ENCODE measurements at regions of chr6 and their contacts with region 1.

Region 1: DNA sequence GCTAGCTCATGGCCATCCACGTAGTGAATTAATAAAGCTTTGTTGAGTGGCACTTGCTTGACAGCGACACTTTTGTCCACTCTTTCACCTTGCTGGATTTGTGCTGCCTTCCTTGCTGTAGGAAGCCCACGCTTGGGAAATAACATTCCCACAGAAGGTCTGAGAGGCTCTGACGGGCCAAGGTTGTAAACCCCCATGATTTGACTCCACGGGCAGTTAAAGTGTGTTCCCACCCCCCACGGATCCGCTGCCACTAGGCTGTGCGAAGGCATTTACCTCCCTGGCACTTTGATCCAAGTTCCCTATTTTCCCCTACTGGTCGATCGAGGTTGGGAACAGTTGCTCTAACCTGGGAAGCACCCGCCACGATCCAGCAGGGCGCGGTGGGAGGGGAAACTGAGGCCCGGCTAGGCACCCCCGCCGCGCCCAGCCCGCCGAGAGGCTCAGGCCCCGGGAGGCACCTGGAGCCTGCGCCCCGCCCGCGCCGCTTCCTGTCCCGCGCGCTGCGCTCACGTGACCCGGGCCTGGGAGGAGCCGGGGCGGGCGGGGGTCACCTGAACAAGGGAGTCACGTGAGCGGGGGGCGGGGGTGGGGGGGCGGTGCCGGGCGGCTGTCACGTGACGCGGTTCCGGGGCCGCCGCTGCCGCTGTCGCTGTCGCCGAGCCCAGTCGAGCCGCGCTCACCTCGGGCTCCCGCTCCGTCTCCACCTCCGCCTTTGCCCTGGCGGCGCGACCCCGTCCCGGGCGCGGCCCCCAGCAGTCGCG is at the start of gene IGF2R:
- DNase-seq: peak; percentile 88 to 94 (median 92)
- ATAC-seq: peak; percentile 95
- H3K4me3 ChIP-seq: peak within 1 kb of the TSS; percentile 69
- H3K4me3 Mint-ChIP-seq: peak within 1 kb of the TSS; percentile 88 to 98 (median 92)
- H3K27ac ChIP-seq: peak within 1 kb of the TSS; percentile 82
- H3K27ac Mint-ChIP-seq: peak within 1 kb of the TSS; percentile 89 to 97 (median 94)
- H3K4me1 ChIP-seq: peaks cover 18 to 28% of the 10 kb centered on the region in 2 donors
- H3K4me1 Mint-ChIP-seq: peaks cover 27 to 43% (median 37%) of the 10 kb centered on the region in 7 donors
- H3K27me3 ChIP-seq: no peaks in the 10 kb centered on the region
- H3K27me3 Mint-ChIP-seq: peaks cover 0 to 30% (median 0%) of the 10 kb centered on the region in 5 donors
- total RNA-seq, gene IGF2R: 59.1 to 79.2 (median 74.2) TPM

Region 2: DNA sequence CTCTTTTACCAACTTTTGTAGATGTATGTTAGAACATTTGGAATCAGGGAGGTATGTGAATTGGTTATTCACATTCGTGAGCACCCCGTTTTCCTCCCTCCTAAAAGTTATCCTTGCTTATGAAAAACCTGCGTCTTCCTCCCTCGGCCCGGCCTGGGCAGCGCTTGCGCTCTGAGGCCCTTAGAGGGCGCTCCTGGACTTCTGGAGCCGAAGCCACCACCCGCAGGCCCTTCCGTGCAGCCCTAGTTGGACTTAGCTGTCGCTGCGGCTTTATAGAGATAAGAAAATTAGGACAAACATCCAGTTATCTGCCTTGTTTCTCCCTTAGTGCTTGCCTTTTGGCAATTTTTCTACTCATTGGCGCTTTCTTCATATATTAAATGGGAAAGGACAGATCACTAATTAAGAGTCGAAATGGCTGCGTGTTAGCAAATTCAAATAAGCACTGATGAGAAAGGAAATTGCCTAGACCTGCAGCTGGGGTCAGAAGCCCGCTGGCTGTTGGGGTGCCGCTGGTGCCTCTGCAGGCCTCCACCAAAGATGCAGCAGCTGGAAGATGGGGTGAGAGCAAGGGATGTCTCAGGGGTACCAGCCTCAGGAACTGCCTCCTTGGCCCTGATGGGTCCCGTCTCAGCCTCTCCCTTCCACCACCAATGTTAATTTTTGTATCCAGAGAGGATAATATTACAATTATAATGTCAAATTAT is 794.2 kb before region 1 on chr6:
- CTCF ChIA-PET with region 1: no interaction called
- POLR2A ChIA-PET with region 1: no interaction called
- intact Hi-C with region 1: no loop called
- DNase-seq: peak; percentile 22 to 67 (median 45)
- ATAC-seq: peak; percentile 84
- H3K4me3 ChIP-seq: no peak overlapping the region
- H3K4me3 Mint-ChIP-seq: peak overlapping the region in 9 of 10 donors; percentile 19 to 69 (median 36)
- H3K27ac ChIP-seq: no peak overlapping the region
- H3K27ac Mint-ChIP-seq: no peak overlapping the region
- H3K4me1 ChIP-seq: peaks cover 0 to 9% of the 10 kb centered on the region in 2 donors
- H3K4me1 Mint-ChIP-seq: peaks cover 4 to 18% (median 10%) of the 10 kb centered on the region in 7 donors
- H3K27me3 ChIP-seq: peaks cover 6 to 16% of the 10 kb centered on the region in 2 donors
- H3K27me3 Mint-ChIP-seq: peaks cover 51 to 66% (median 59%) of the 10 kb centered on the region in 5 donors

Region 3: DNA sequence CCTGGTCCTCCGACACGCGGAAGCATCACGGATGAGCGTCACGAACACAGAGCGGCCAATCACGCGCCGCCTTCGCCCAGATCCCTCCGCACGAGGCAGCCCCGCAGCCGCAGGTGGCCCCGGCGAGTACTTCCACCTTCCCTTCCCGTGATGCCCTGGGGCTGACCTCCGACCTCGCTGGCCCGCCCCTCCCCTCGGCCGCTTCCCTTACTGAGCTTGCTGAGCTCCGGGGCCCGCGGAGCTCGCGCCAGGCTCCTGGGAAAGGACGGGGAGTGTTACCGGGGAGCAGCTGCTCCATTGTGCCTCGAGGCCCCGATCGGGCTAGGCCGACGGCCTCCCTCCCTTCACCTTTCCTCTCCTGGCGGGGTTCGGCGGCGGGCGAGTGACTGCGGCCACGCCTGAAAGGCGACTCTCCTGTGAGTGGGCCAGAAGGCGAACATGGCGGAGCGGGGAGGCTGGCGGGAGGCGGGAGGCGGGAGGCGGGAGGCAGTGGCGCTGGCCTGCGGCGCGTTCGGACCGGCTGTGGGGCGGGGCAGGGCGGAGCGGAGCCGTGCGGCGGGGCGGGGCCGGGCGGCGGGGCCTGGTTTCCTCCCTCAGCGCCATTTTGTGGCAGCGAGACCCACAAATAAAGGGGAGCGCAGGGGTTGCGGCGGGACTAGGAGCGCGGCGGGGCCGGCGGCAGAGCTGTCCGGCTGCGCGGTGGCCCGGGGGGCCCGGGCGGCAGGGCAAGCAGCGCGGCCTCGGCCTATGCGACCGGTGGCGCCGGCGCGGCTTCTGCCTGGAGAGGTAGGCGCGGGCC is 241.5 kb before region 1 on chr6 and contains the start of gene WTAP:
- CTCF ChIA-PET with region 1: no interaction called
- POLR2A ChIA-PET with region 1: interaction called, 9 read pairs
- intact Hi-C with region 1: loop called (anchors 1 to 2 kb)
- DNase-seq: peak; percentile 83 to 97 (median 97)
- ATAC-seq: peak; percentile 93
- H3K4me3 ChIP-seq: peak within 1 kb of the TSS; percentile 89
- H3K4me3 Mint-ChIP-seq: peak within 1 kb of the TSS; percentile 87 to 97 (median 95)
- H3K27ac ChIP-seq: peak within 1 kb of the TSS; percentile 91
- H3K27ac Mint-ChIP-seq: peak within 1 kb of the TSS; percentile 95 to 100 (median 99)
- H3K4me1 ChIP-seq: peaks cover 33 to 34% of the 10 kb centered on the region in 2 donors
- H3K4me1 Mint-ChIP-seq: peaks cover 34 to 79% (median 67%) of the 10 kb centered on the region in 7 donors
- H3K27me3 ChIP-seq: no peaks in the 10 kb centered on the region
- H3K27me3 Mint-ChIP-seq: peaks cover 0 to 6% (median 0%) of the 10 kb centered on the region in 5 donors
- total RNA-seq, gene WTAP: 117 to 152 (median 141) TPM

Region 4: GRCh38 chr6:159829526-159829925 is 139.1 kb before region 1 on chr6:
- CTCF ChIA-PET with region 1: no interaction called
- POLR2A ChIA-PET with region 1: no interaction called
- intact Hi-C with region 1: no loop called
- DNase-seq: no peak
- ATAC-seq: peak; percentile 53
- H3K4me3 ChIP-seq: no peak overlapping the region
- H3K4me3 Mint-ChIP-seq: no peak overlapping the region
- H3K27ac ChIP-seq: no peak overlapping the region
- H3K27ac Mint-ChIP-seq: peak overlapping the region in 1 of 9 donors; percentile 67
- H3K4me1 ChIP-seq: peaks cover 0 to 21% of the 10 kb centered on the region in 2 donors
- H3K4me1 Mint-ChIP-seq: peaks cover 9 to 42% (median 26%) of the 10 kb centered on the region in 7 donors
- H3K27me3 ChIP-seq: no peaks in the 10 kb centered on the region
- H3K27me3 Mint-ChIP-seq: peaks cover 0 to 13% (median 0%) of the 10 kb centered on the region in 5 donors

Region 5: GRCh38 chr6:159852877-159853276 is 115.7 kb before region 1 on chr6:
- CTCF ChIA-PET with region 1: no interaction called
- POLR2A ChIA-PET with region 1: no interaction called
- intact Hi-C with region 1: loop called in 1 of 2 experiments (anchors 10 kb)
- DNase-seq: peak in 6 of 9 donors; percentile 12 to 59 (median 41)
- ATAC-seq: peak; percentile 37
- H3K4me3 ChIP-seq: no peak overlapping the region
- H3K4me3 Mint-ChIP-seq: no peak overlapping the region
- H3K27ac ChIP-seq: no peak overlapping the region
- H3K27ac Mint-ChIP-seq: peak overlapping the region in 1 of 9 donors; percentile 38
- H3K4me1 ChIP-seq: no peaks in the 10 kb centered on the region
- H3K4me1 Mint-ChIP-seq: peaks cover 0 to 6% (median 0%) of the 10 kb centered on the region in 7 donors
- H3K27me3 ChIP-seq: no peaks in the 10 kb centered on the region
- H3K27me3 Mint-ChIP-seq: peaks cover 0 to 37% (median 0%) of the 10 kb centered on the region in 5 donors

Region 6: DNA sequence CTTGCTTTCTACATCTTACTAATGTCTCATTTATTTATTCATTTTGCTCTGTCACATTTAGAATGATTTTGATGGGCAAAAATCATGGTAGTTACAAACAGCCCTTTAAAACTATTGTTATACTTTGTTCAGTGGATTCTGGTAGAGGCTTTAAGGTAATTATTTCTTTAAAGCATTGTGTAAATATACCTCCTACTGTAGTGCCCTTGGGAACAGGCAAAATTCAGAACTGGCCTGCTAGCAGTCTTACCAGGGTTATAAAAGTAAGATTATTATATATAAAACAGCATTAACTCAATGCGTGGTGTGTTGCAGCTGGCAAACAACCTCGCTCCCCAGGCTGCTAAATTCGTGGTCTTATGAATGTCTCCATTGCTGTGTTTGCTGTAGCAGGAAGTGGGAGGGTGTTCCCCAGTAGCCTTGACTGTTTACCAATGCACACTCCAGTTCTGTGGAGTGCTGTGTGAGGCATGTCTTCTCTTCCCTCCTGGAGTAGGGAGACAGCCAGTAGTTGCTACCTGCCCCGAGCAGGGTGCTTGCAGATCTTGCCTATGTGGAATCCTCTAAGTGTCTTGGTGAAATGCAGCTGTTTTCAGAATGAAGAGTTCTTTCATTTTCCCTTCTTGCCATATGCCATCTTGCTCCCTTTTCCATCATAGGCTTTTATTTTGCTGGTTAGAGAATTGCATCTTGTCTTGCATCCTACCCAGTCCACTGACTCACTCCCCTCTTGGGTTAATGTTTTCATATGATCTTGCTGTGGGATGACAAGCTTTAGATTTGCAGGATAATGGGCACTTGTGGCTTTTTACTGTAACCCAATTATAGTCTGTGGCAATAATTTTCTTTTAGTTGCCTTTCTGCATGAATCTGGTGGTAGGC is 45.6 kb after region 1 on chr6:
- CTCF ChIA-PET with region 1: no interaction called
- POLR2A ChIA-PET with region 1: interaction called, 13 read pairs
- intact Hi-C with region 1: loop called (anchors 1 kb)
- DNase-seq: peak in 7 of 9 donors; percentile 12 to 31 (median 25)
- ATAC-seq: peak; percentile 72
- H3K4me3 ChIP-seq: peak overlapping the region; percentile 24
- H3K4me3 Mint-ChIP-seq: peak overlapping the region; percentile 50 to 86 (median 75)
- H3K27ac ChIP-seq: peak overlapping the region; percentile 52
- H3K27ac Mint-ChIP-seq: peak overlapping the region; percentile 82 to 96 (median 89)
- H3K4me1 ChIP-seq: peaks cover 33 to 39% of the 10 kb centered on the region in 2 donors
- H3K4me1 Mint-ChIP-seq: peaks cover 49 to 82% (median 69%) of the 10 kb centered on the region in 7 donors
- H3K27me3 ChIP-seq: no peaks in the 10 kb centered on the region
- H3K27me3 Mint-ChIP-seq: no peaks in the 10 kb centered on the region

Region 7: DNA sequence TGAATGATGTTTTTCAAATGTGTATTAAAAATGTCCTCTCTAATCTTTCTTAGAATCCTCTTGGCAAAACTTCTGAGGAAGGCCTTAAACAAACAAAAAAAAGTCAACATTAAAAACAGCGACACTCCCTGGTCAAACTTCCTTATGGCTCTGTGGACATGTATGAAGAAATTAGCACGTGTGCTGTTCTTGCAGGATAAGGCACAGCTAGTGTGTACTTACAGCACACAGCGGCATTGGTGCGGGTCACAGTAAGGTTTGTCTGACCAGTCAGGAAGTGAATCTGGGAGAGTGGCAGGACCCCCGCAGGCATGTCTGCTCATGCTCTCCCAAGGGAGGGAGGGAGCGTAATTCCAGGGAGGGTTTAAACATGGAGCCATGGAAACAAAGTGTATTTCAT is 191.8 kb after region 1 on chr6:
- CTCF ChIA-PET with region 1: no interaction called
- POLR2A ChIA-PET with region 1: no interaction called
- intact Hi-C with region 1: no loop called
- DNase-seq: no peak
- ATAC-seq: no peak
- H3K4me3 ChIP-seq: no peak overlapping the region
- H3K4me3 Mint-ChIP-seq: no peak overlapping the region
- H3K27ac ChIP-seq: no peak overlapping the region
- H3K27ac Mint-ChIP-seq: no peak overlapping the region
- H3K4me1 ChIP-seq: no peaks in the 10 kb centered on the region
- H3K4me1 Mint-ChIP-seq: no peaks in the 10 kb centered on the region
- H3K27me3 ChIP-seq: no peaks in the 10 kb centered on the region
- H3K27me3 Mint-ChIP-seq: peaks cover 0 to 16% (median 6%) of the 10 kb centered on the region in 5 donors

Region 8: DNA sequence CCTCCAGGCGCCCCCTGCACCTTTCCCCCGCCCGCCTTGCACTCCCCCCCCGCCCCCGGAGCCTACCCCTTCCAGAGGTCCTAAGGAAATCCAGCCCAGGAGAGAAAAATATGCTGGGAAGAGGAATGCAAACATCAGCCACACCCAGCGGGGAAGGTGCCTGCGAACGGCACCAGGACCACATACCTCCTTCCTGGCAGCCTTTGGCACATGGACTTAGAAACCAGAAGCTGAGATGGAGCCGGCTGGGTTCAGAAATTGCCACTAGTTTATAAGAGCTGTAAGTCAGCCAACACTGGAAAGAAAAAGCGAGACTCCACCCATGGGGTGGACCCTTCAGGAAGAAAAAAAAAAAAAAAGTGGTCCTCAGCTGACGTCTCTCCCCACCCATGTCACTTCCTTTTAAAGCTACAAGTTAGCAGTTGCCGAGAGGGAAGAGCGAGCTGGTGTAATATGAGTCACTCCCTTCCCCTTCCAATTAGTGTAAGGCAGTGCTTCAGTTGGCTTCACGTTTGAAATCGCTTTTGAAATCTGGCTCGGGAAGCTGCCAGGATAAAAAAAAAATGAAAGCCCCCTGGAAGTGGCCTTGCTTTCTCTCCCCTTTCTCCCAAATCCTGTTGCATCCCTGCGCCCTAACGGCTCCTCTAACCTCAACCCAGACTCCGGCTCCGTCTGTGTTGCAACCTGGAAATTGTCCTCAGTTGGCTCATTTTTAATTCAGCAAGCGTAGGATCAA is 1305.3 kb after region 1 on chr6 and contains the start of gene AGPAT4:
- CTCF ChIA-PET with region 1: no interaction called
- POLR2A ChIA-PET with region 1: interaction called, 4 read pairs
- intact Hi-C with region 1: loop called in 1 of 2 experiments (anchors 10 kb)
- DNase-seq: peak; percentile 31 to 85 (median 78)
- ATAC-seq: peak; percentile 96
- H3K4me3 ChIP-seq: peak within 1 kb of the TSS; percentile 46
- H3K4me3 Mint-ChIP-seq: peak within 1 kb of the TSS; percentile 82 to 98 (median 94)
- H3K27ac ChIP-seq: peak within 1 kb of the TSS; percentile 66
- H3K27ac Mint-ChIP-seq: peak within 1 kb of the TSS; percentile 87 to 98 (median 94)
- H3K4me1 ChIP-seq: peaks cover 0 to 6% of the 10 kb centered on the region in 2 donors
- H3K4me1 Mint-ChIP-seq: peaks cover 10 to 31% (median 19%) of the 10 kb centered on the region in 7 donors
- H3K27me3 ChIP-seq: no peaks in the 10 kb centered on the region
- H3K27me3 Mint-ChIP-seq: peaks cover 0 to 15% (median 0%) of the 10 kb centered on the region in 5 donors
- total RNA-seq, gene AGPAT4: 2.0 to 16.2 (median 4.4) TPM

Measured in naive thymus-derived CD4-positive, alpha-beta T cell (primary cell).